GM18951 (cell line): ENCODE measurements at regions of chr6 and their contacts with region 1.

Region 1: DNA sequence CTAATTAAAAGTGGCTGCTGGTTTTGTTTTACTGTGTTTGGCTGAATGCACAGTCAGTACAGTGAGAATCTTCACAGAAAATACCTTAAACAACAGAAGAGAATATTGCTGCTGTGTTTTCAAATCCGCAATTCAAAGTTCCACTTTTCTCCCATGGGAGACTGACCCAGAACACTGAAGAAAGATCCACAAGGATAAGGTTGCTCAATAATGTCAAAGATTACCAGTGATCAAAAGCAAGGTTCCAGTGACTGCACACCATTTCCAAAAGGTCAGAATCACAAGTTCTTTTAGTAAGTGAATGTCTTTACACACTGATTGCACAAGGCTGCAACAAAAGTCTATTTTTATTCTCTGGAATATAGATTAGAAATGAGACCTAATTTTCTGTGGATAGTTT is 82.3 kb downstream of the EPHA7 start:
- POLR2A ChIP-seq: no peak

Region 2: DNA sequence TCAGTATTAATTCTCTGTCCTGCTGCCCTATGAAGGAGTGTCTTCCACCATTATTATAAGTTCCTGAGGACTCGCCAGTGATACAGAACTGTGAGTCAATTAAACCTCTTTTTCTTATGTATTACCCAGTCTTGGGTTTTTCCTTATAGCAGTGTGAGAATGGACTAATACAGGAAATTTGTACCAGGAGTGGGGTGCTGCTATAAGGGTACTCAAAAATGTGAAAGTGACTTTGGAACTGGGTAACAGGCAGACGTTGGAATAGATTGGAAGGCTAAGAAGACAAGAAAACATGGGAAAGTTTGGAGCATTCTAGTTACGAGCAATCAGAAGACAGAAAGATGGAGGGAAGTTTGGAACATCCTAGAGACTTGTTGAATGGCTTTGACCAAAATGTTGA is 699.0 kb after region 1 on chr6:
- in situ Hi-C with region 1: loop called (anchors 10 kb)
- POLR2A ChIP-seq: no peak